ENCODE measurements at regions of chr15 and their contacts with region 1.

Region 1: DNA sequence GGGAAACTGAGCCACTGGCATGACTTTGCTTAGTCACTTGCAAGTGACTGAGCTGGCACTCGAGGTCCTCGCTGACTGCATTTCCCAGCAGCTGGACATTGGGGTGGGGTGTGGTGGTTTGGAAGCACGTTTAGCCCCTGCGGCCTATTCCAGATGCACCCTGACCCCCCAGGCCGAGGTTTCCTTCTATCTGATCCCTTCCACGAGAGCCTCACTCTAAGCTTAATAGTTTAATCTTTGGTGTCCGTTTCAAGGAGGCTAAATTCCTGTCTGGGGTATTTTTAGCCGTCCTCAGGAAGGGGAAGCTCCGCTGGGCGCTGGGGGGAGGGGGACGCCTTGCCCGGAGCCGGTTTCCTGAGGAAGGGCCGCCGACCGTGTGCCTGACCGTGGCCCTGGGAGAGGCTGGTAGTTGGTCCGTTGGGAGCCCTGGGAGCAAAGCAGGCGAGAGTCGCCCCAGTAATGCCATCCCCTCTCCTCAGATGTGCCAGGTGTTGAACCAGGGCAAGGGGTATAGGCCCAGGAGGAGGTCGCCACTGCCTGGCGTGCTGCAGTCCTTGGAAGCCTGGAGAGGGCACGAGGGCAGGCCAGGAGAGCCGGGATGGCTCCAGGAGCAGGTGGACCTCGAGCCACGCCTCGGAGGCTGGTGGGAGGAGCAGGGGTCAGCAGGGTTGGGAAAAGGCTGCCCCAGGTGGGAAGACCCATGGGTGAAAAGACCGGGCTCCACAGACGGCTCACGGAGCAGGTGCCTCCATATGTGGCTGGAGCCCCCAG is 37.2 kb downstream of the IDH2 start:
- DNase-seq: peak; percentile 64 to 80
- ATAC-seq: peak; percentile 52 to 68 (median 60)
- H3K4me3 ChIP-seq: peak overlapping the region; percentile 26
- H3K27ac ChIP-seq: peak overlapping the region; percentile 82
- H3K4me1 ChIP-seq: peaks cover 50% of the 10 kb centered on the region
- H3K27me3 ChIP-seq: no peaks in the 10 kb centered on the region
- CTCF ChIP-seq: no peak

Region 2: GRCh38 chr15:89904519-89904918 is 160.6 kb before region 1 on chr15:
- intact Hi-C with region 1: loop called in 1 of 2 experiments (anchors 5 kb)
- DNase-seq: no peak
- ATAC-seq: no peak
- H3K4me3 ChIP-seq: no peak overlapping the region
- H3K27ac ChIP-seq: no peak overlapping the region
- H3K4me1 ChIP-seq: no peaks in the 10 kb centered on the region
- H3K27me3 ChIP-seq: no peaks in the 10 kb centered on the region
- CTCF ChIP-seq: no peak

Measured in psoas muscle (tissue), 8 donors.